ENCODE measurements at regions of chr3 and their contacts with region 1.

Region 1: GRCh38 chr3:123652346-123652984 is 67.6 kb upstream of the HACD2 start:
- DNase-seq: peak; percentile 87
- H3K4me3 Mint-ChIP-seq: no peak overlapping the region
- H3K27ac Mint-ChIP-seq: no peak overlapping the region
- H3K4me1 Mint-ChIP-seq: peaks cover 5% of the 10 kb centered on the region
- H3K27me3 Mint-ChIP-seq: no peaks in the 10 kb centered on the region
- CTCF ChIP-seq: peak; percentile 53

Region 2: GRCh38 chr3:123700791-123701722 is 48.6 kb after region 1 on chr3:
- CTCF ChIA-PET with region 1: interaction called, 13 read pairs
- intact Hi-C with region 1: loop called (anchors 5 kb)
- DNase-seq: no peak
- H3K4me3 Mint-ChIP-seq: no peak overlapping the region
- H3K27ac Mint-ChIP-seq: no peak overlapping the region
- H3K4me1 Mint-ChIP-seq: no peaks in the 10 kb centered on the region
- H3K27me3 Mint-ChIP-seq: no peaks in the 10 kb centered on the region
- CTCF ChIP-seq: no peak

Region 3: GRCh38 chr3:123723522-123724168 is 71.2 kb after region 1 on chr3:
- CTCF ChIA-PET with region 1: interaction called, 12 read pairs
- intact Hi-C with region 1: loop called (anchors 2 kb)
- DNase-seq: peak; percentile 66
- H3K4me3 Mint-ChIP-seq: no peak overlapping the region
- H3K27ac Mint-ChIP-seq: no peak overlapping the region
- H3K4me1 Mint-ChIP-seq: no peaks in the 10 kb centered on the region
- H3K27me3 Mint-ChIP-seq: no peaks in the 10 kb centered on the region
- CTCF ChIP-seq: no peak

Region 4: DNA sequence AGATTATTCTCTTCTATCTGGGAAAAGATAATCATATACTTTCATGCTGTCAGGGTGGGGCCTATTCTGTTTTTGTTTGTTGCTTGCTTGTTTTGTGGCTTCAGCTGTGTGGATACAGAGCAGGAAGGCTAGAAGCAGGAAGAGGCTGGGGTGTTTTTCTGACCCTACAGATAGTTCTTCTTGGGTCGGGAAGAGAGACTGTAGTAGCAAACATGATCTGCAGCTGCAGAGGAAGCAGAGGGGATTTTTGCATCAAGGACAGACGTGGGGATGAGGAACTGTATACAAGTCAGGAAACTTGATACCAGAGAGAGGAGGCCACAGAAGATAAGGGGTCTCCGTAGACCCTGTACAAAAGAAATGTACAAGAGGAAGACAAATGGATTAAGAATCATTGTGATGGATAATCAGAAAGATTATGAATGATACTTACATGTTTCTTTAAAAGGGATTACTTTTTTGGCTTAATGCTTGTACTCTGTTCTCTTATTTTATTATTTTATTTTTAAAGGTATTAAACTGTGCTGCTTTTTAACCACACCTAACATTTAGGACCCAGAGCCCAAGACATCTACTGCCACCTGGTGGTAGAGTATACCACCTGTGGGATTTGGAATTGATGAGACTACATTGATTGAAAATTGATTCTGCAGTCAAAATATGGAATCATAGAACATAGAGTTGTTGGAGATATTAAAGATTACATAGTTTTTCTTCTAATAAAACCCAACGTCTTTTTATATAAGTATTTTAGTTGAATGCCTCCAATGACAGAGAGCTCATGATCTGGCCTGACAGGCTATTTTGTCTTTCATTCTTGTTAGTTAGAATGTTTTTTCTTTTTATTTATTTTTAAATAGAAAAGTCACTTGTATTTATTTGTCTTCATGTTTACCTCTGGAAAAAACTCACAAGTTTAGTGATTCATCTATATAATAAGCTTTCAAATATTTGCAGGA is 426.8 kb after region 1 on chr3:
- CTCF ChIA-PET with region 1: no interaction called
- intact Hi-C with region 1: loop called (anchors 5 kb)
- DNase-seq: peak; percentile 31
- H3K4me3 Mint-ChIP-seq: no peak overlapping the region
- H3K27ac Mint-ChIP-seq: no peak overlapping the region
- H3K4me1 Mint-ChIP-seq: no peaks in the 10 kb centered on the region
- H3K27me3 Mint-ChIP-seq: peaks cover 79% of the 10 kb centered on the region
- CTCF ChIP-seq: no peak